ENCODE measurements at regions of chr2 and their contacts with region 1.

Region 1: GRCh38 chr2:219997341-219997851 is 370.0 kb downstream of the SLC4A3 start:
- DNase-seq: peak in 1 of 2 experiments; percentile 69
- H3K4me3 ChIP-seq: no peak overlapping the region
- H3K4me1 ChIP-seq: no peaks in the 10 kb centered on the region
- H3K27me3 ChIP-seq: peaks cover 17% of the 10 kb centered on the region; the same call in 1 of the 2 replicates

Region 2: GRCh38 chr2:219736209-219736608 is 261.2 kb before region 1 on chr2:
- in situ Hi-C with region 1: loop called (anchors 5 kb)
- DNase-seq: peak; percentile 50 to 69
- H3K4me3 ChIP-seq: no peak overlapping the region
- H3K4me1 ChIP-seq: no peaks in the 10 kb centered on the region
- H3K27me3 ChIP-seq: peaks cover 5% of the 10 kb centered on the region; the same call in 1 of the 2 replicates